Right ventricle myocardium superior (tissue), 1 donor: ENCODE measurements at regions of chr4 and their contacts with region 1.

Region 1: DNA sequence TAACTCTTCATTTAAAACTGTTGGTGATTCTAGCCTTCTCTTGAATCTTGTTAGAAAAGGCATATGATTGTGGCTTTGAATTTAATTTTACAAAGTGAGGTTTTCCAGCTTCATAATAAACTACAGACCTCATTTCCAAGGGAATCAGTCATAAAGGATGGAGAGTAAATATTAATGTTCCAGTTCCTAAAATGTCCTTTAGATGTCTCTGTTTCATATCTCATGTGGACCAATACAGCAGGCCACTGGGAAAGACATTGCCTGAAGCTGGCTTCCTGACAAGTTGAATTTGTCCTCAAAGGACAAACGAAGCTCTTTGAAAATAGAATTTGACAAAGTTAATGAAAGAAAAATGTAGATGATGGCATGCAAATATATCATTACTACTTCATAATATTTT is 125.4 kb downstream of the ZNF330 start:
- DNase-seq: no peak
- ATAC-seq: peak; percentile 90

Region 2: GRCh38 chr4:141058739-141059512 is 287.2 kb before region 1 on chr4:
- intact Hi-C with region 1: no loop called
- DNase-seq: no peak
- ATAC-seq: no peak

Region 3: DNA sequence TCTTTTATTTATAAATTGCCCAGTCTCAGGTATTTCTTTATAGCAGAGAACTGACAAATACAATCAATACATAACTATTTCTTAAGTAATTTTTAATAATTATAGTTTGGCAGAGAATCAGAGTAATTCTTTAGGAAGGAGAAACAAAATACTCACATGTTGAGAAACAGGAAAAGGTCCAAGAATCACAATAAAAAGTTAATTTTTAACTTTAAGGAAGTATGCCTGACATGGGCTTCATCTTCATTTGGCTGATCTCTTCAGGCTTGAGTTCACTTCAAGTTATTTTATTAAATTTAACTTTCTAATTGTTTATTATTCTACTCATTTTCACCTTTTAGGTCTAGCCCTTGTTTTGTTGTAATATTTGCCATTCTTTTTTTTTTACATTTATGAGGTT is 176.8 kb before region 1 on chr4:
- intact Hi-C with region 1: no loop called
- DNase-seq: no peak
- ATAC-seq: no peak

Region 4: GRCh38 chr4:141246243-141246642 is 99.9 kb before region 1 on chr4:
- intact Hi-C with region 1: no loop called
- DNase-seq: no peak
- ATAC-seq: no peak

Region 5: DNA sequence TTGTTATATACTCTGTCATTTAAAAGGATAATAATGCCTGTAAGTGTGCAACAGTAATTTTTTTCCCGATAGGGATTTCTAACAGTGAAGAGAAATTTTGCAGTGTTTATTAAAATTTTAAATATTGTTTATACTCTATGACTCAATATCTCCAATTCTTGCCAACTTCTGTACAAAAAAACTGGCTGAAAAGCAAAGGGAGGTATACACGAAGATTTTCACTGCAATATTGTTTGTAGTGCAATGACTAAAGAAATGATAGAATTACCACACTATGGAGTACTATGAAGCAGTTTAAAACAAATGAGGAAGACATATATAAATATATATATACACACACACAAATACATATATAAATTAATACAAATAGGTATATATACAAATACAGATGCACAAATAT is 102.3 kb after region 1 on chr4:
- intact Hi-C with region 1: no loop called
- DNase-seq: no peak
- ATAC-seq: no peak

Region 6: DNA sequence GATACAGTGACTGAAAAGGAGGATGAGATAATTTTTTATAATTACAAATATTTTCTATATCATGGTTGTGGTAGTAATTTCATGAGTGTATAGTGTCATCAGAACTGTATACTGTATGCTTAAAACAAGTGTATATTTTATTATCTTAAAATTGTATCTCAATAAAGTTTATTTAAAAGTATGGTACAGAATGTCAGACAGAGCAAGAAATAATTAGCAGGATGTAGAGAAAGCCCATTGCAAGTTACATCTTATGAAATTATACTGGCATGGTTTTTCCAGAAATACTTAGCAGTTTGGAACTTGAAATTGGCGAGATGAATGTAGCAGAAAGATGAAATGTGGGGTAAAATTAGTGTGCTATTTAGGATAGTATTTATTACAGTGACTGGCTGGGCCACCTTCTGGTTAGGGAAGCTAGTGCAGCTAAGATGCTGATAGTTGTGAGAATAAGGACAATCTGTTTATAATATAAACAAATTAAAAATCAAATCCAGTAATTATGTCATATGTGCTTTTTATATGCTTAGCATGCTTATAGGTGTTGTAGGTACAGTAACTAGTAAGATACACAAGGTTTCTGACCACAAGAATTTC is 365.0 kb after region 1 on chr4:
- intact Hi-C with region 1: loop called (anchors 5 kb)
- DNase-seq: peak; percentile 36
- ATAC-seq: no peak